ENCODE measurements at regions of chr5 and their contacts with region 1.

Region 1: GRCh38 chr5:76867827-76868693 is 18.2 kb downstream of the S100Z start:
- DNase-seq: peak; percentile 27 to 67 (median 48)
- ATAC-seq: peak; percentile 84
- H3K4me3 ChIP-seq: no peak overlapping the region
- H3K4me3 Mint-ChIP-seq: no peak overlapping the region
- H3K27ac ChIP-seq: no peak overlapping the region
- H3K27ac Mint-ChIP-seq: no peak overlapping the region
- H3K4me1 ChIP-seq: no peaks in the 10 kb centered on the region
- H3K4me1 Mint-ChIP-seq: no peaks in the 10 kb centered on the region
- H3K27me3 ChIP-seq: no peaks in the 10 kb centered on the region
- H3K27me3 Mint-ChIP-seq: no peaks in the 10 kb centered on the region
- CTCF ChIP-seq: peak; percentile 69

Region 2: DNA sequence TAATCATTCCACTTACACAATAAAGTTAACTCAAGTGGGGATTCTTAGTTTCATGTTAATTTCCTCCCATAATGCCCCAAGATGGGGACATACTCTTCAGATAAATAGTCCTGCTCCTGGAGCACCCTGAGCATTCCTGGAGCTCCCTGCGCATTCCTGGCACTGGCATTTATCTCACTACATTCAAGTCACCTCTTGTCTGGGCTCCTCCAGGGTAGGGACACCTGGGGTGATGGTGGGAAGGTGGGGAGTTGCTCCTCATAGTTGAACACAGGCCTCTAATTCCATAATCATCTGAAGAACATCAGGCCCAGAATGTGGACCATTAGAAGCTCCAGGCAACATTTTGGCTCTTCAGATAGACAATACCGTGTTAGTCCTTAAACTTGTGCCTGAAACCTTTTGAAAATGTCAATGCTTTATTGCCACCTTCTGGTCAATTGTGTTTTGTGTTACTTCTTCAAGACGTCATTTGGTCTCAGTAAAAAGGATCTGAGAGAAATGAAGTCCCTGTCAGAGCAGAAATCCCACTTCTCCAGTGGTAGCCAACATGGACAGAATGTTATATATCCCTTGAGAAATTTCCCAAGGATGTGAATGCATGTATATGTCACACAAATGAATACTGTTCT is 148.0 kb after region 1 on chr5:
- CTCF ChIA-PET with region 1: no interaction called
- POLR2A ChIA-PET with region 1: no interaction called
- intact Hi-C with region 1: loop called (anchors 5 kb)
- DNase-seq: peak in 2 of 9 experiments; percentile 10 to 30
- ATAC-seq: no peak
- H3K4me3 ChIP-seq: no peak overlapping the region
- H3K4me3 Mint-ChIP-seq: no peak overlapping the region
- H3K27ac ChIP-seq: no peak overlapping the region
- H3K27ac Mint-ChIP-seq: no peak overlapping the region
- H3K4me1 ChIP-seq: no peaks in the 10 kb centered on the region
- H3K4me1 Mint-ChIP-seq: no peaks in the 10 kb centered on the region
- H3K27me3 ChIP-seq: peaks cover 0 to under 1% of the 10 kb centered on the region in 2 experiments
- H3K27me3 Mint-ChIP-seq: peaks cover 23% of the 10 kb centered on the region
- CTCF ChIP-seq: peak; percentile 18

Region 3: DNA sequence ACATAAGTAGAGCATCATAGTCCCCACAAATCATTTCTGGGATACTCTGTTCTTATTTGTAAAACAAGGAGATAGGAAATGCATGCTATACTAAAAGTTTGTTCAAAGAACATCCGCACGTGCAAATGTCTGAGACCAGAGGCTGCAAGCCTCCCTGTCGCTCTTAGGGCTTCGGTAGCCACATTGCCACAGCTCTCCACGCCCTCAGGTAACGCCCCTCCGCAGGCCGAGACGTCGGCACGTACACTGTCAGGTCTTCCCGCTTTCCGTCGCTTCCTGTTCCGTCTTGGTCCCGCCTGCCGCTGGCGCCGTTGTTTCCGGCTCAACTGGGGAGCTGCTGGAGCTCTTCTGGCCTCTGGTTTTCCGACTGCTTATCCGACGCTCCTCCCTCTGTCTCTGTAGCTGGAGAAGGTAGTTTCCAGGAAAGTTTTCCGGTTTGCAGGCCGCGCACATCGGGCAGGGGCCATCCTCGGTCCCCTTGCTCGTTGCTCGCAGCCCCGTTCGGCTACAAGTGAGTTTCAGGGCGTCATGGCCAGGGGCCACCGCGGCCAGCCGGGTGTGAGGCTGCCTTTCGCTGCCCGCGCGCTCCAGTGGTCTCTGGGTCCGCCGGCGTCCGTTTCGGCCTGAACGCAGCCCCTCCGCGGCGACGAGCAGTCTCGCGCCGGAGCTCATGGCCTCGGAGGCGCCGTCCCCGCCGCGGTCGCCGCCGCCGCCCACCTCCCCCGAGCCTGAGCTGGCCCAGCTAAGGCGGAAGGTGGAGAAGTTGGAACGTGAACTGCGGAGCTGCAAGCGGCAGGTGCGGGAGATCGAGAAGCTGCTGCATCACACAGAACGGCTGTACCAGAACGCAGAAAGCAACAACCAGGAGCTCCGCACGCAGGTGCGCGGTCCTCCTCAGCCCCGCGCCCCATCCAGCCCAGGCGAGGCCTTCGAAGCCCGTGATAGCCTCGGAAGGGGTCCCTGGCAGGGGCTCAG is 162.3 kb after region 1 on chr5 and contains the start of gene AGGF1:
- CTCF ChIA-PET with region 1: no interaction called
- POLR2A ChIA-PET with region 1: no interaction called
- intact Hi-C with region 1: no loop called
- DNase-seq: peak; percentile 78 to 95 (median 92)
- ATAC-seq: peak; percentile 98
- H3K4me3 ChIP-seq: peak within 1 kb of the TSS; percentile 84 to 94
- H3K4me3 Mint-ChIP-seq: peak within 1 kb of the TSS; percentile 90
- H3K27ac ChIP-seq: peak within 1 kb of the TSS; percentile 69 to 85
- H3K27ac Mint-ChIP-seq: peak within 1 kb of the TSS; percentile 94
- H3K4me1 ChIP-seq: peaks cover 21% of the 10 kb centered on the region
- H3K4me1 Mint-ChIP-seq: peaks cover 43% of the 10 kb centered on the region
- H3K27me3 ChIP-seq: no peaks in the 10 kb centered on the region
- H3K27me3 Mint-ChIP-seq: no peaks in the 10 kb centered on the region
- CTCF ChIP-seq: no peak
- total RNA-seq, gene AGGF1: 14.8 to 14.9 TPM

Region 4: DNA sequence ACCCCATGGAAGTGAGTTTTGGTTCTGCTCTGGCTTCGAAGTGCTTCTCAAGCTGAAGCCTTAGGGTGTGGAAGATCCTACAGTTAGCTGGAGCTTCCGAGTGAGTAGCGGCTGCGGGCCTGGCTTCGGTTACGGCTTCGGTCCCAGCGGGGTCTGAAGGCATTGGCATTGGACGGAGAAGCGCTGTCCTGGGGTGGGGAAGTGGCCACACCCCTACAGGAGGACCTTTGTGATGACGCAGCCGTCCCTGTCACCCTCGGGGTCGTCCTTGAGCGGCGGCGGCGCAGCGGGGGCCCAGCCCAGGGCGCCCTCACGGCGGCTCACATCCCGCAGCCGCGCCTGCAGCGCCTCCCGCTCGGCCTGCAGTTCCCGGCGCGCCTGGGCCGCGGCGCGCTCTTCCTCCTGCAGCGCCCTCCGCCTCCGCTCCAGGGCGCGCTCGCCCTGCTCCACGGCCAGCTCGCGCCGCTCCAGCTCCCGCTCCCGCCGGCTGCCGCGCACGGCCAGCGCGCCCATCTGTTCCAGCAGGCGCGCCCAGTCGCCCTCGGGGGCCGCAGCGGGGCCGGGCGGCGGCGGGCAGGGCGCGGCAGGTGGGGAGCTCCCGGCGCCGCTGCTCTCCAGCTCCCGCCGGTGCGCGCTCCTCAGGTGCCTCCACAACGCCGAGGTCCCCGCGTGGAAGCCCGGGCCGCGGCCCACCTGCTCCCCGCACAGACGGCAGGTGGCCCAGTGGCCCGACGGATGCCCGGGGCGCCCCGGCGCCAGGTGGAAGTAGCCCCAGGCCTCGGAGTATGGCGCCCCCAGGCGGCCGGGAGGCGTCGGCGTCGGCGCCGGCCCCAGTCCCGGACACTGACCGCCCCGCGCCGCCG is 209.1 kb after region 1 on chr5:
- CTCF ChIA-PET with region 1: interaction called, 4 read pairs
- POLR2A ChIA-PET with region 1: no interaction called
- intact Hi-C with region 1: loop called (anchors 5 kb)
- DNase-seq: peak in 8 of 9 experiments; percentile 29 to 69 (median 54)
- ATAC-seq: peak; percentile 75
- H3K4me3 ChIP-seq: peak overlapping the region; percentile 3 to 39
- H3K4me3 Mint-ChIP-seq: peak overlapping the region; percentile 72
- H3K27ac ChIP-seq: no peak overlapping the region
- H3K27ac Mint-ChIP-seq: no peak overlapping the region
- H3K4me1 ChIP-seq: no peaks in the 10 kb centered on the region
- H3K4me1 Mint-ChIP-seq: peaks cover 12% of the 10 kb centered on the region
- H3K27me3 ChIP-seq: no peaks in the 10 kb centered on the region
- H3K27me3 Mint-ChIP-seq: no peaks in the 10 kb centered on the region
- CTCF ChIP-seq: peak; percentile 70

Region 5: GRCh38 chr5:78009937-78010527 is 1142.0 kb after region 1 on chr5:
- CTCF ChIA-PET with region 1: no interaction called
- POLR2A ChIA-PET with region 1: no interaction called
- intact Hi-C with region 1: loop called in 1 of 2 experiments (anchors 10 kb)
- DNase-seq: no peak
- ATAC-seq: no peak
- H3K4me3 ChIP-seq: no peak overlapping the region
- H3K4me3 Mint-ChIP-seq: no peak overlapping the region
- H3K27ac ChIP-seq: no peak overlapping the region
- H3K27ac Mint-ChIP-seq: no peak overlapping the region
- H3K4me1 ChIP-seq: no peaks in the 10 kb centered on the region
- H3K4me1 Mint-ChIP-seq: no peaks in the 10 kb centered on the region
- H3K27me3 ChIP-seq: no peaks in the 10 kb centered on the region
- H3K27me3 Mint-ChIP-seq: no peaks in the 10 kb centered on the region
- CTCF ChIP-seq: no peak

Region 6: GRCh38 chr5:78132507-78132906 is 1264.4 kb after region 1 on chr5:
- CTCF ChIA-PET with region 1: no interaction called
- POLR2A ChIA-PET with region 1: no interaction called
- intact Hi-C with region 1: loop called in 1 of 2 experiments (anchors 10 kb)
- DNase-seq: no peak
- ATAC-seq: no peak
- H3K4me3 ChIP-seq: no peak overlapping the region
- H3K4me3 Mint-ChIP-seq: no peak overlapping the region
- H3K27ac ChIP-seq: no peak overlapping the region
- H3K27ac Mint-ChIP-seq: no peak overlapping the region
- H3K4me1 ChIP-seq: no peaks in the 10 kb centered on the region
- H3K4me1 Mint-ChIP-seq: no peaks in the 10 kb centered on the region
- H3K27me3 ChIP-seq: no peaks in the 10 kb centered on the region
- H3K27me3 Mint-ChIP-seq: no peaks in the 10 kb centered on the region
- CTCF ChIP-seq: no peak

Region 7: DNA sequence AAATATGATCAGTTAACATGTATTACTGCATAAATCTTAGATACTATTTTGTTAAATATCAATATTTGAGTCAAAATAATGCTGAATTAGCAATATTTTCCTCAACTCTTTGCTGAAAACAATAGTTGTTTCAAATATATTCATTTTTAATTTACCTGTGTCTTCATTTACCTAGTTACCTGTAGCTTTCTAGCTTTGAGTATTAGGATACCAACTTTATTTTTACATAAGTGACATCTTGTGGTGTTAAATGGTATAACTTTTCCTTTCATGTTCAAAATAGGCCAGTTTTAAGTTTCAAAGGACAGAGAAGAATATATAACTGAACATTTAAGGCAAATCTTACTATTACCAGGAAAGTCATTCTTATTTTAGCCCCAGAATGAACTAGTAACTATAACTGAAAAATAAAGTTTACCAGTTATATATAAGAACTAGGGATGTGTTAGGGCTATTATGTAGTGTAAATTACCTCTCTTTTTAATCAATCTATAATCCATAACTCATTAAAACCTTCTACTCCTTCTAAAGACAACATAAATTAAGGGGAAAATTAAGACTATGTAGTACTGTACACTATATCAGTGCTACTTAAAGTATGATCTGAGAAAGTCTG is 1401.1 kb after region 1 on chr5:
- CTCF ChIA-PET with region 1: no interaction called
- POLR2A ChIA-PET with region 1: no interaction called
- intact Hi-C with region 1: loop called in 1 of 2 experiments (anchors 2 kb)
- DNase-seq: peak in 2 of 9 experiments; percentile 15 to 41
- ATAC-seq: peak; percentile 57
- H3K4me3 ChIP-seq: no peak overlapping the region
- H3K4me3 Mint-ChIP-seq: no peak overlapping the region
- H3K27ac ChIP-seq: no peak overlapping the region
- H3K27ac Mint-ChIP-seq: no peak overlapping the region
- H3K4me1 ChIP-seq: no peaks in the 10 kb centered on the region
- H3K4me1 Mint-ChIP-seq: peaks cover 30% of the 10 kb centered on the region
- H3K27me3 ChIP-seq: no peaks in the 10 kb centered on the region
- H3K27me3 Mint-ChIP-seq: no peaks in the 10 kb centered on the region
- CTCF ChIP-seq: peak; percentile 83

Region 8: GRCh38 chr5:78300464-78301045 is 1432.5 kb after region 1 on chr5:
- CTCF ChIA-PET with region 1: no interaction called
- POLR2A ChIA-PET with region 1: no interaction called
- intact Hi-C with region 1: loop called in 1 of 2 experiments (anchors 2 kb)
- DNase-seq: peak in 2 of 9 experiments; percentile 39 to 55
- ATAC-seq: no peak
- H3K4me3 ChIP-seq: no peak overlapping the region
- H3K4me3 Mint-ChIP-seq: no peak overlapping the region
- H3K27ac ChIP-seq: no peak overlapping the region
- H3K27ac Mint-ChIP-seq: no peak overlapping the region
- H3K4me1 ChIP-seq: no peaks in the 10 kb centered on the region
- H3K4me1 Mint-ChIP-seq: peaks cover 4% of the 10 kb centered on the region
- H3K27me3 ChIP-seq: peaks cover 0 to 2% of the 10 kb centered on the region in 2 experiments
- H3K27me3 Mint-ChIP-seq: no peaks in the 10 kb centered on the region
- CTCF ChIP-seq: peak; percentile 49

Measured in CD8-positive, alpha-beta T cell (primary cell).